ENCODE measurements at regions of chr3 and their contacts with region 1.

Region 1: GRCh38 chr3:127534564-127534963 is 56.0 kb downstream of the TPRA1 start:
- DNase-seq: no peak
- H3K4me3 ChIP-seq: no peak overlapping the region
- H3K27ac ChIP-seq: no peak overlapping the region
- H3K4me1 ChIP-seq: no peaks in the 10 kb centered on the region
- H3K27me3 ChIP-seq: peaks cover 4% of the 10 kb centered on the region
- CTCF ChIP-seq: no peak

Region 2: DNA sequence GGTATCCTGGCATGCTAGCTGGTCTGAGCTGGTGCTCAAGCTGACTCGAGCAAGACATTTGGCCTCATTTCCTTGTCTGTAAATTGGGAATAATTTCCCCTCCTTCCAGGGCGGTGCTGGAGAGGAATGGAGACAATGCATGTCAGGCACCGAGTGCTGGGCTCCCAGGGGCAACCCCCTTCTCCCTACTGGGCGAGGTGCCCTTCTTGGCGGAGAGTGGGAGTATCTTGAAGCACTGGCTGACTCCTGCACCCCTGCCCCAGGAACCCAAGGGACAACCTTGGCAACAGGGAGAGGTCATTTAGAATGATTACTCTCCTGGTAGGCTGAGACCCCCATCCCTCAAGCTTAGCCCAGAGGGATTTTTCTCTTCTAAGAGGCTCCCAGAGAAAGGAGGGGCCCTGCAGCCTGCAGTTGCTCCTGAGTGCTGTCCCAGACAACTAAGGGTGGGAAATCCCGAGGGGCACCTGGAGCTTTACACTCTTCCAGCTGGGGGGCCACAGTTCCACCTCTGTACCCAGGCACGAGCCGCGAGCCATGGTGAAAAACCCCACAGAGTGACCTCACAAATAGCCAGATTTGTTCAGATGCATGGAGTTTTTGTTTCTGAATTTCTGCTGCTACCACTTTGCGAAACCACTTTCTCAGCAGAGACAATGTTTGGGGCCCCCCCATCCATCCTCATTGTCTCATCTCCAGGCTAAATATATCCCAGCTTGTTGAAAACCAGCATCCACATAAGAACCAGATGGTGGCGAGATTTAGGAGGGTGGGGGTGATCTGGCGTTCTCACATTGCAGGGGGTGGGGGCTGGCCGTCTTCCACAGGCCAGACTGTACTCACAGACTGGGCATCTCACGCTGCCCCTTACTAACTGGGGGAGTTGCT is 183.0 kb after region 1 on chr3:
- CTCF ChIA-PET with region 1: no interaction called
- POLR2A ChIA-PET with region 1: no interaction called
- intact Hi-C with region 1: no loop called
- DNase-seq: no peak
- H3K4me3 ChIP-seq: no peak overlapping the region
- H3K27ac ChIP-seq: no peak overlapping the region
- H3K4me1 ChIP-seq: peaks cover 6% of the 10 kb centered on the region
- H3K27me3 ChIP-seq: no peaks in the 10 kb centered on the region
- CTCF ChIP-seq: no peak

Region 3: DNA sequence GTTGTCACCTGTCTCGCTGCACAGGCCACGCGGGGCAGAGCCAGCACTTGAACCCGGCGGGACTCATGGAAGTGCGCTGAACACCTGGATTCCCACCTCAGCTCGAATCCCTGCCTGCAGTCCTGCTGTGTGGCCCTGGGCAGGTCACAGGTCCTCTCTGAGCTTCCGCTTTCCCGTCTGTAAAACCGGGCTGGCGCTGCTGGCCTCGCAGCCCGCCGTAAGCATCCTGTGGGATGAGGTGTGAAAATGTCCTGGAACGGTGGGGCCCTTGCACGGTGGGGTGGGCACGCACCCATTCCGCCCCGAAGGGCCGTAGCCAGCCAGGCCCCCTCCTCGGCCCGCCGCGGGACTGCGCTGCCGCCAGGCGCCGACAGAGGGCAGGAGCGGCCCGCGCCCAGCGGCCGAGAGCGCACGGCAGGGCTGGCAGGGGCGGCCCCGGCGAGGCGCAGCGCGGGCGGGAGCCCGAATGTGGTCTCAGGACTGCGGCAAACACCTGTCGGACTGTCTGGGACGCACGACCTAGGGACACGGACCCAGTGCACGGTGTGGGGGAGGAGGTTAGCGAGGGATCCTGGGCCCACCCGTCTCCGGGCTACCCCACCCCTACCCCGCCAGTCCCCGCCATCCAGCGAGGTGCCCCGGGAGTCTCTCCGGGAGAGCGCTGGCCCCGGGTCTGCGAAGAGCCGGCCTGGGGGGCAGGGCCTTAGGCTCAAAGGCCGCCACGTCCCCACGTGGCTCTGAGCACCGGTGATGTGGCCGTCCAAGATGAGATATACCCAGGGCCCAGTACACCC is 891.8 kb after region 1 on chr3:
- CTCF ChIA-PET with region 1: no interaction called
- POLR2A ChIA-PET with region 1: no interaction called
- intact Hi-C with region 1: no loop called
- DNase-seq: peak; percentile 58
- H3K4me3 ChIP-seq: no peak overlapping the region
- H3K27ac ChIP-seq: no peak overlapping the region
- H3K4me1 ChIP-seq: peaks cover 2% of the 10 kb centered on the region
- H3K27me3 ChIP-seq: no peaks in the 10 kb centered on the region
- CTCF ChIP-seq: peak; percentile 71

Region 4: DNA sequence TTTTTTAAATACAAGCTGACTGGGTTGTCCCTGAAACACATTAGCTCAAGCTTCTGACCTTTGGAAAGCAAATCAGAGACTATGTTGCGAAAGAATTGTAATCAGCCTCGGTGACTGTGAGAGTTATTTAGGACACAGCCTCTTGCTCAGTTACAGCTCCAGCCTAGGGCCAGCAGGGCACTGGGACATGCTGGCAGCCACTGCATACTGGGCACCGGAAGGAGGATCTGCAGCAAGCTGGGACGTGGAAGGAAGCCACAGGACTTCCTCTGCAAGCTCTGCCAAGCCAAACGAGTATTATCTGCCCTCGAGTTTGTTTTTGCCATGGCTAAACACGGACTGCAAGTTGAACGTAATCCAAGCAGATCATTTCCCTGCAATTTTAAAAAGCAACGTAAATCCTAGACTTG is 1690.4 kb after region 1 on chr3:
- CTCF ChIA-PET with region 1: no interaction called
- POLR2A ChIA-PET with region 1: interaction called, 17 read pairs
- intact Hi-C with region 1: no loop called
- DNase-seq: peak; percentile 47
- H3K4me3 ChIP-seq: no peak overlapping the region
- H3K27ac ChIP-seq: peak overlapping the region; percentile 37
- H3K4me1 ChIP-seq: peaks cover 4% of the 10 kb centered on the region
- H3K27me3 ChIP-seq: no peaks in the 10 kb centered on the region
- CTCF ChIP-seq: no peak

Measured in A673 (cell line).